Left ventricle myocardium superior (tissue), 1 donor: ENCODE measurements at regions of chr2 and their contacts with region 1.

Region 1: DNA sequence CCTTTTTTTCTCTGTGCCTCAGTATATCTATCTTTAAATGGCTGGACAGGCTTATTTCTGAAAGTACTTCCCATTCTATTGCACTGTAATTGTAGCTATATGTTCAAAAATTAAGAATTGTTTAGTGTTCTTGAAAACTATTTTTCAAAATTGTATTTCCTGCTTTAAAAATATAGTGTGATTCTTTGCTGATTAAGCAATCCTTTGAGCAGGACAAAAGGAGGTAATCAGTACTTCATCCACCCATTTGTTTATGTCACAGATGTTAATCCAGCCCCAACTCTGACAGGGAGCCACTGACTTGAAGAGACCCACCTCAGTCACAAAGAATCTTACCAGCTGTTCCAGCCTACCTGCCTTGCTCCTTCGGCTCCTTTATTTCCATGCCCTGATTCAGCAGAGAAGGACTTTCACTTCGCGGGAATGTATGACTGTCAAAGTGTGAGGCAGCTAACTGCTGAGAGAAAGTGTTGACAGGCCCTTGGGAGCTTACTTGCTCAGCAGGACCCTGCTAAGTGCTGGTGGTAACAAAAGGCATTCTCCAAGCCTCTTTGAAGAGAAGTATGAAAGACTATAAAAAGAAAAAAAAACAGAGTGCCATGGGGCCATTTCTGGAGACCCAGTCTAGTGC is 393.3 kb upstream of the CYRIA start:
- DNase-seq: no peak
- ATAC-seq: no peak

Region 2: GRCh38 chr2:17036361-17036760 is 22.5 kb before region 1 on chr2:
- intact Hi-C with region 1: loop called (anchors 2 kb)
- DNase-seq: no peak
- ATAC-seq: no peak